ENCODE measurements at regions of chr3 and their contacts with region 1.

Region 1: DNA sequence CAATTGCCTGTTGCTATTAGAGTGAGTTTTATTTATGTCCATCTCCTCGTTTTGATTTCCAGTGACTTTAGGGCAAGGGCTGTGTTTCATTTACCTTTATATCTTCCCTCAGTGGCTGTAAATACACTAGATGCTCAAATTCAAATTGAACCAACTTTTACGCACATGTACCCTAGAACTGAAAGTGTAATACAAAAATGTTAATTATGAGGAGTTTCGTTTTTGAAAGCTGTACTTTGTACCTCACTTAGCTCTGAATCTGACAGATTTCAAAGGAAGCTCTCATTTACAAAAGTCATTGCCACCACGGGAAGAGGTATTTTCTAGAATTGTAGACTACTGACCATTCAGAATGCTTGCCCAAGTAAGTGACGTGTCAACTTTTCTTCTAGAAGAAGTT is 264.4 kb downstream of the MECOM start:
- DNase-seq: no peak
- ATAC-seq: no peak

Region 2: DNA sequence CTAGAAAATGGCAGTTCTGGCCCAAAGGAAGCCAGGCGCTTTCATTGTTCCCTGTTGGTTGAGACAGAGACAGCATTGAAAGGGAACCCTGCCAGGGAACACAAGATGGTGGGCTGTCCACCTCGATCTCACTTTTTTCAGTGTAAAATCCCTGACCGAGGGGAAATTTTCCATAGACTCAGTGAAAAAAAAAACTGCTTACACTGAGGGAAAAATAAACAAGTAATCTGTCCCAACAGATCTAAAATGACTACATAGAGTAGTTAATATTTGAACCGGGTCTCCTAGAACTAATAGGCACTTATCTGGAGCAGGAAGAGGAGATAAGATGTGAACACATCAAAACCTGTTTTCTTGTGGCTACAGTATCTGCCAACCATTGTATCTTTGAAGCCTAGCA is 539.9 kb before region 1 on chr3:
- intact Hi-C with region 1: no loop called
- DNase-seq: no peak
- ATAC-seq: no peak

Region 3: GRCh38 chr3:169430707-169431404 is 31.8 kb after region 1 on chr3:
- intact Hi-C with region 1: loop called in 1 of 2 experiments (anchors 5 kb)
- DNase-seq: peak in 1 of 2 donors; percentile 30
- ATAC-seq: peak; percentile 95

Region 4: DNA sequence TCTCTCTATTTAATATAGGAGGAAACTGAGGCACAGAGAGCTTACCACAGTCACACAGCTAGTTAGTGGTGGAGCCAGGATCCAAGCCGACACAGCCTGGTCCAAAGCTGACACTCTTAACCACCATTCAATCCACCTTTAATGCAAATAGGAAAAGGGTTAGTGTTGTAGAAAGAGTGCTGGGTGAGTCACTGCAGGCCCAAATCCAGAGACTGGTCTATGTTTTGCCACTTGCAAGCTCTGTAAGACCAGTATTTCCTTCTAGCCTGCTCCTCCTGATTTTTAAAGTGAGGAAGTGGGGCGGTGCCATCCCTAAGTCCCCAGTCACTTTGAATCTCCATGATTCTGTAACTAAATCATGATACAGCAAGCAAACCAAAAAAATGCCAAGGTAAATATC is 153.5 kb after region 1 on chr3:
- intact Hi-C with region 1: no loop called
- DNase-seq: no peak
- ATAC-seq: no peak